Endothelial cell of umbilical vein (primary cell): ENCODE measurements at regions of chr1 and their contacts with region 1.

Region 1: DNA sequence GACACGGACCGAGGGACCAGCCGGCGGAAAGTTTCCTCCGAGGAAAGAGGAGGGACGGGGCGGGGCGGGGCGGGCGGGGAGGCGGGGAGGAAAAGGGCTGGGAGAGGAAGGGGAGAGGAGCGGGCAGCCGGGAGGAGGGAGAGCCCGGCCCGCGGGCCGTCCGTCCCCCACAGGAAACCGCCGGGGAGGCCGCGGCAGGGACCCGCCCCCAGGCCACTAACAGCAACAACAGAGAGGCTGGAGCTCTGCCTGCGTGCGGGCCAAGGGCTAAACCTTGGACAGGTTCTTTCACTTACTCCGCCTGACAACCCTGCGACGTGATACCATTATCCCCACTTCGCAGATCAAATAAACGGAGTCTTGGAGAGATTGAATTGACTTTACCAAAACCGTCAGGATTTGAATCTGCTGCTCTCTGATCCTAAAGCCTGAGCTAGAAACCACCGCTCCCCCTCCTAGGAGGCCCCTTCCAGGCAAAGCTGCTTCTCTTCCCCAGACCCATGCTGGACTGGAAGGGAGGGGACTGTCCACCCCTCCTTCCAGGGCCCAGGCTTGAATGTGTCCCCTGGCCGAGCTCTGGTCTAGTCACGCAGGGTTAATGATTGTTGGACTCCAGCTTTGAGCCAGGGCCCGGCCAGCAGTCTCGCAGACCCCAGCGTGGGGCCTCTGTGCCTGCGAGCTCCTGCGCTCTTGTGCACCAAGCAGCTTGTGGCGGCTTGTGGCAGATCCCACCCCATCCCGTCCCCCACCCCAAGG is at the start of gene EVA1B:
- DNase-seq: peak; percentile 90
- H3K4me3 ChIP-seq: peak within 1 kb of the TSS; percentile 61 to 85 (median 71)
- H3K27ac ChIP-seq: peak within 1 kb of the TSS; percentile 62
- H3K4me1 ChIP-seq: peaks cover 15% of the 10 kb centered on the region
- H3K27me3 ChIP-seq: no peaks in the 10 kb centered on the region
- CTCF ChIP-seq: no peak
- POLR2A ChIP-seq: no peak
- total RNA-seq, gene EVA1B: 63.2 and 64.7 TPM in 2 replicates

Region 2: DNA sequence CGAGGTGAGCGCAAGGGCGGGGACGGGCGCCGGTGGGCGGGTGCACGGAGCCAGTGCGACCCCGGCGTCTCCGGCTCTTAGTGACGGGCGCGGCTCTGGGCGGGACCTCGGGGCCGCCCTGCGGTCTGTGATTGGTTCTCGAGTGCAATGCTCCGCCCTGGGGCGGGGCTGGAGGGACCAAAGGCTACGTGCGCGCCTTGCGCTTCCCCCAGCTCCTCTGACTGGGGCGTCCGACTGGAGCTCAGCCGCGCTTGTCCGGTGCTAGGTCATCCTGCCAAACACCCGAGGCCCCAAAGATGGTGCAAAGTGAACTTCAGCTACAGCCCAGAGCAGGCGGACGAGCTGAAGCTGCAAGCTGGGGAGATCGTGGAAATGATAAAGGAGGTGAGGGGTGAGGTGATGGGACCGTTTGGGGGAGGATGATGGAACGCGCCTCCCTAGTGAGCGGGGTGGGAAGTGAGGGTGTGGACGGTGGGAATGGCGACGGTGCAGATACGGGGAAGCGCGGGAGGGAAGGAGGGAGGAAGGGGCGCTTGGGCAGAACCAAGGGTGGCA is 16.8 kb before region 1 on chr1:
- CTCF ChIA-PET with region 1: interaction called, 3 read pairs
- POLR2A ChIA-PET with region 1: interaction called, 4 read pairs
- dilution Hi-C with region 1: no loop called
- intact Hi-C with region 1: loop called (anchors 1 kb)
- DNase-seq: peak; percentile 97
- H3K4me3 ChIP-seq: peak overlapping the region; percentile 43 to 52 (median 52)
- H3K27ac ChIP-seq: peak overlapping the region; percentile 16
- H3K4me1 ChIP-seq: peaks cover 15% of the 10 kb centered on the region
- H3K27me3 ChIP-seq: no peaks in the 10 kb centered on the region
- CTCF ChIP-seq: no peak
- POLR2A ChIP-seq: peak; percentile 95

Region 3: GRCh38 chr1:36350659-36351226 is 27.0 kb after region 1 on chr1:
- CTCF ChIA-PET with region 1: interaction called, 4 read pairs
- POLR2A ChIA-PET with region 1: no interaction called
- dilution Hi-C with region 1: no loop called
- intact Hi-C with region 1: loop called (anchors 1 kb)
- DNase-seq: peak; percentile 85
- H3K4me3 ChIP-seq: no peak overlapping the region
- H3K27ac ChIP-seq: peak overlapping the region; percentile 89
- H3K4me1 ChIP-seq: peaks cover 49% of the 10 kb centered on the region
- H3K27me3 ChIP-seq: no peaks in the 10 kb centered on the region
- CTCF ChIP-seq: no peak
- POLR2A ChIP-seq: no peak